PC-3 (cell line): ENCODE measurements at regions of chr6 and their contacts with region 1.

Region 1: DNA sequence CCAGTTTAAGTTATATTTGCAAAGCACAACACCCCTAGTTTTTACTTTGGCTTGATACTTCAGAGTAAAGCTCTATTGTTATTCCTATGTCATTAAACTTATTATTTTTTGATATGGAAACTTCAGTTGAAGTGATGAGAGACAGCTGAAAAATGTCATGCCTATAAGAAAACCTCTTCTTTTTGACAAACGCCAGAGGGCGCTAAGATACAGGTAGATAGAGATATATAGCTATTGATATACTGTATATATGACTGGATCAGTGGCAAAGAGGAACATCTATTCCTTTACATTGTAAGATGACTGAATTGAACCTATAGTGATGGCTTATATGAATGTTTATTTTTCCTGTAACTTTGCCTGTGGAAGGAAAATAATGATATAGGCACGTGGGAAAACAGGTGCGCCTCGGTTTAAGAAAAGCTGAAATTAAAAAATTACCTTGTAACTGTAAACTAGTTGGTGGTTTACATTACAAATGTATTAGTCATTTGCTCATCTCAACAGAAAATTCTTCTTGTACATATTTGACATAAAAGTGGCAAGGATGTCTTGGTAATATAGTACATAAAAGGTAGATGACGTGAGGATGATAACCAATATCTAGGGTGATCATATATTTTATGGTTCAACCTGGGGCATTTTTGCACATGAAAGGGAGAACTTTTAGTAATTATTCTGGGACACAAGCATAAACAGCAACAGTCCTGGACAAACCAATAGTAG is 74.1 kb downstream of the LAMA4 start:
- DNase-seq: peak; percentile 75
- ATAC-seq: peak; percentile 85
- H3K4me3 ChIP-seq: 0 out of 2 replicates have a peak overlapping the region, but pooled peaks have one; percentile 23
- H3K27ac ChIP-seq: peak overlapping the region; percentile 40
- H3K4me1 ChIP-seq: peaks cover 33% of the 10 kb centered on the region
- H3K27me3 ChIP-seq: no peaks in the 10 kb centered on the region
- CTCF ChIP-seq: peak; percentile 85

Region 2: GRCh38 chr6:112203577-112204349 is 23.5 kb after region 1 on chr6:
- CTCF ChIA-PET with region 1: interaction called, 3 read pairs
- POLR2A ChIA-PET with region 1: no interaction called
- intact Hi-C with region 1: loop called (anchors 1 kb)
- DNase-seq: peak; percentile 96
- ATAC-seq: peak; percentile 77
- H3K4me3 ChIP-seq: peak overlapping the region; percentile 33; the same call in 1 of the 2 replicates
- H3K27ac ChIP-seq: peak overlapping the region; percentile 95
- H3K4me1 ChIP-seq: peaks cover 64% of the 10 kb centered on the region
- H3K27me3 ChIP-seq: no peaks in the 10 kb centered on the region
- CTCF ChIP-seq: no peak

Region 3: DNA sequence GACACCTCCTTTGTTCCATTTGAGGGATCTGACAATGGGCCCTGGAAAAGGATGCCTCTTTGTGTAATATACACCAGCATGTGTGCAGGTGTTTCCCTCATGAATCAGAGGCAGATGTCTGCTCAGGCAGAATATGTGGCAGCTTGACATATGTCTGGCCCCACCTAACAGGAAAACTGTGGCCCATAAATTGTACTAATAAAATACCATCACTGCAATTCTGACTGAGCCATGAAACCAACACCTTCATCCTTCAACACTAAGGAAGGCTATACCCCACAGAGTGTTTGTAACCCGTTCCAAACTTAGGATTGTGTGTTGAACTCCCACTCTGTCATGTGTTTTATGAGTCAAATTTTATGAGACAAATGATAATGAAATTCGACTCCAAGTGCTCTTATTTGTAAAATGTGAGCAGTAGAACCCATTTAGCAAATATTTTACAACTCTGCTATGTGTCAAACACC is 51.4 kb after region 1 on chr6:
- CTCF ChIA-PET with region 1: no interaction called
- POLR2A ChIA-PET with region 1: no interaction called
- intact Hi-C with region 1: loop called (anchors 1 kb)
- DNase-seq: peak; percentile 80
- ATAC-seq: peak; percentile 92
- H3K4me3 ChIP-seq: no peak overlapping the region
- H3K27ac ChIP-seq: peak overlapping the region; percentile 39
- H3K4me1 ChIP-seq: peaks cover 34% of the 10 kb centered on the region
- H3K27me3 ChIP-seq: no peaks in the 10 kb centered on the region
- CTCF ChIP-seq: no peak

Region 4: DNA sequence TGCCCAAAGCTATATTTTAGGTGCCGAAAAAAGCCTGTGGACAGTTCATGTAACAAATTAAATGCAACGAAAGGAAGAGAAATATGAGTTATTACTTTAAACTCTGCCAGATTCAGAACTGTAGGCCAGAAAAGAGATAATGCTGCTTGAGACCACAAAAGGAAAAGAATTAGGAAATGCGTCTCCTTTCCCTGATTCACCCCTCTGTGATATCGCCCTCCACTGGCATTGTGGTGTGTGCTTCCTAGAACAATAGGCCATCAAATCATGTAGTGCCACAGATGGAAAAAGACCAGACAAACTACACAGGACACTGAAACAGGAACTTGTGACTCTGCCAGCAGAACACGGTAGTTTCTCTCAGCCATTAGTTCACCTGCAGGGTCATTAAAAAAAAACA is 88.9 kb after region 1 on chr6:
- CTCF ChIA-PET with region 1: interaction called, 3 read pairs
- POLR2A ChIA-PET with region 1: no interaction called
- intact Hi-C with region 1: loop called (anchors 1 kb)
- DNase-seq: peak; percentile 36
- ATAC-seq: no peak; the same call in 1 of the 2 replicates
- H3K4me3 ChIP-seq: no peak overlapping the region
- H3K27ac ChIP-seq: no peak overlapping the region
- H3K4me1 ChIP-seq: no peaks in the 10 kb centered on the region
- H3K27me3 ChIP-seq: no peaks in the 10 kb centered on the region
- CTCF ChIP-seq: peak; percentile 58

Region 5: DNA sequence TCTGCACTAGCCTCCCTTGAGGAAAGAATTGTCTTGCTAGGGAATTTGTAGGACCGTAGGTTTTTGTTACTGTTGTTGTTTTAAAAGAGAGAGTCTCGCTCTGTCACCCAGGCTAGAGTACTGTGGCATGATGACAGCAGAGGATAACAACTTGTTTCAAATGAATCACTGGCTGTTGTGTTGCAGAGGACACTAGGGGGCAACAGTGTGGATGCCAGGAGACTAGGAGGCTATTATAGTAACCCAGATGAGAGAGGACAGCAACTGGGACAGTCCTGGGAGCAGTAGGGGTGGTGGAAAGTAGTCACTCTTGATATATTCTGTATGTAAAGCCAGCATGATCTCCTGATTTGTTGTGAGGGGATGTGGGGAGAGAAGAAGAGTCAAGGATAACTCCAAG is 115.9 kb after region 1 on chr6:
- CTCF ChIA-PET with region 1: interaction called, 3 read pairs
- POLR2A ChIA-PET with region 1: interaction called, 3 read pairs
- intact Hi-C with region 1: loop called (anchors 5 kb)
- DNase-seq: peak; percentile 56
- ATAC-seq: peak; percentile 12; the same call in 1 of the 2 replicates
- H3K4me3 ChIP-seq: no peak overlapping the region
- H3K27ac ChIP-seq: no peak overlapping the region
- H3K4me1 ChIP-seq: peaks cover 47% of the 10 kb centered on the region
- H3K27me3 ChIP-seq: no peaks in the 10 kb centered on the region
- CTCF ChIP-seq: peak; percentile 62

Region 6: GRCh38 chr6:112311950-112312547 is 131.8 kb after region 1 on chr6:
- CTCF ChIA-PET with region 1: interaction called, 8 read pairs
- POLR2A ChIA-PET with region 1: no interaction called
- intact Hi-C with region 1: loop called (anchors 1 kb)
- DNase-seq: peak; percentile 55
- ATAC-seq: no peak
- H3K4me3 ChIP-seq: no peak overlapping the region
- H3K27ac ChIP-seq: no peak overlapping the region
- H3K4me1 ChIP-seq: peaks cover 3% of the 10 kb centered on the region; the same call in 1 of the 2 replicates
- H3K27me3 ChIP-seq: no peaks in the 10 kb centered on the region
- CTCF ChIP-seq: peak; percentile 69

Region 7: GRCh38 chr6:112372226-112372806 is 192.1 kb after region 1 on chr6:
- CTCF ChIA-PET with region 1: no interaction called
- POLR2A ChIA-PET with region 1: no interaction called
- intact Hi-C with region 1: loop called (anchors 1 kb)
- DNase-seq: peak; percentile 55
- ATAC-seq: peak; percentile 55
- H3K4me3 ChIP-seq: no peak overlapping the region
- H3K27ac ChIP-seq: no peak overlapping the region
- H3K4me1 ChIP-seq: no peaks in the 10 kb centered on the region
- H3K27me3 ChIP-seq: no peaks in the 10 kb centered on the region
- CTCF ChIP-seq: peak; percentile 69

Region 8: DNA sequence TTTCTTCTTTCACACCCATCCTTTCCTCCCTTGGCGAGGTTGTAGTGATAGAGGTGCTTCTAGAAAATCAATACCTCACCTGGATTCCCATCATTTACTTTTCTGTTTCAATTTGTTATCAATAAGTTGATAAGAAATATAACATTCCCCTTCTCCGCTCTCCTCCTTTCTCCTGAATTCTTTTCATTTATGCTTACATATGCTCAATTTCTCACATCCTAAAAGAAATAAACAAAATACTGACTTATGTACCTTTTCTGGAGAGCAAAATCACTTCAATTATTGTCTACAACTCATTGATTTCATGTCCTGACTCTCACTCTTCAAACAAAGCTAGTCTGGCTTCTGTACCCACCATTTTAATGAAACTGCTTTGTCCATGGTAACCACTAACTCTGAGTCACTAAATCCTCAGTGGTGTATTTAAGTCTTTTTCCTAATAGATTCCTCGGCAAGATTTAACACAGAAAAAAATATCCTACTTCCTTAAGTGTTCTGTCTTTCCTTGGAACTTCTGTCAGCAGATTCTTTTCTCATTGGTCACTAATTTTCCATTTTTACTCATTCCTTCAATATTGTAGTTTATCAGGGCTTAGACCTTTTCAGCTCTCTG is 456.5 kb after region 1 on chr6:
- CTCF ChIA-PET with region 1: no interaction called
- POLR2A ChIA-PET with region 1: no interaction called
- intact Hi-C with region 1: no loop called
- DNase-seq: peak; percentile 15
- ATAC-seq: no peak
- H3K4me3 ChIP-seq: no peak overlapping the region
- H3K27ac ChIP-seq: no peak overlapping the region
- H3K4me1 ChIP-seq: 0 out of 2 replicates have a peak, but pooled peaks cover 3% of the 10 kb centered on the region
- H3K27me3 ChIP-seq: no peaks in the 10 kb centered on the region
- CTCF ChIP-seq: no peak

Region 9: DNA sequence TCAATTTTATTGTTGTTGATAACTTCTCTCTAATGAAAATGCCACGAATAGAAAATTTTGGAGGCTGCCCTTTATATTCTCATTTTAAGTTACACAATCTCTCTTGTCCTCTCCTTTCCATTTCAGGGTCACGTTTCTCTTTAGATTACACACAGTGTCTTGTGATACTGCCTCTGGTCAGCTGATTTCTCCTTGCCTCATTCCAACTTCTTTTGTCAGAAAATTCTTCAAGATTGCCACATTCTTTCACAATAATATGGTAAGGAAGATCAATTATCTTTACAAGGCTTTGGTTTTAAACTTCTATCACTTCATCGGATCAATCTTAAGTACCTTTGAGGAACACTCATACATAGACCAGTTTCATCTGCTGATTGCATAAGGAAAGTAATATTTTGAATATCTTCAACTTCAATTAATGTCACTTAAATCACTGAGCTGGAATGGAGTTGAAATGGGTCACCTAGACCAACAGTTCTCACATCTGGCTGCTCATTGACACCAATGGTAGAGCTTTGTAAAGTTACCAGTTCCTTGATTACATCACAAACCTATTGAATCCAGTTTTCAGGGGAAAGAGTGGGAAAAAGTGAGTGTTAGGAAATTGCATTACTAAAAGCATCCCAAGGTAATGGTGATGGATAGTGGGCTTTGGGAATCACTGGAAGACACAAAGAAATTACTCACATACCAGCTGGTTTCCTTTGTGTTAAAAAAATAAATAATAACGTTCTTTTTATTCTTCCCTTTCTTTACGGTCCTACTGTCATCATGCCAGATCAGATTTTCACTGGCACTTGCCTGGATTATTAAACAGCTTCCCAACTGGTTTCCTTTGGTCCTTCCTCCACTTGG is 537.4 kb after region 1 on chr6:
- CTCF ChIA-PET with region 1: no interaction called
- POLR2A ChIA-PET with region 1: no interaction called
- intact Hi-C with region 1: no loop called
- DNase-seq: no peak
- ATAC-seq: no peak
- H3K4me3 ChIP-seq: no peak overlapping the region
- H3K27ac ChIP-seq: no peak overlapping the region
- H3K4me1 ChIP-seq: no peaks in the 10 kb centered on the region
- H3K27me3 ChIP-seq: no peaks in the 10 kb centered on the region
- CTCF ChIP-seq: no peak